OCI-LY7 (cell line): ENCODE measurements at regions of chr15 and their contacts with region 1.

Region 1: DNA sequence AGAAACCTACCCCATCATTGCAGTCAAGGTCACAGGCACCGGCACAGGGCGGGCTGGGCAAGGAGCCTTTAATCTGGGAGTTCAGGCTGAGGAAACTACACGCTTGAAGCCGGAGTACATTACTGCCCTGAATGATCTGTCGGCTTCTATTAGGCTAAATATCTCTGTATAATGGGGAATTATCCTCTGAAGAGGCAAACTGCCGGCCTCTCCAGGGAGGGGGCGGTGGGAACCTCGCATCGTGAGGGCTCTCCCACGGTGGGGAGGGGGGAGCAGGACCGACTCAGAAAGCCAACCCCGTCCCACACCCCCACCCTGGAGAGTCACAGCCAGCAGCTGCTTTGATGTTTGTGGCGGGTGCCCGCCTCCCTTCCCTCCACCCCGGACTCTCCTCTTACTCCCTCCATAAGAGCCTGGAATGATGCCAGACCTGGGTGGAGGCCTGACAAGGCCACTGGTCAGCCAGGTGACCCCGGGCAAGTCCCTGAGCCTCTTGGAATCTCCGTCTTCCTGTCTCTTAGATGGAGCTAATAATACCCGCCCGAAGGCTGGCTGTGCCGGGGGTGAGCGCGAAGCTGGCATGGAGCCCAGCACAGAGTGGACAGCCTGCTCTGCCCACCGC is 63.4 kb upstream of the LINGO1 start:
- DNase-seq: no peak
- H3K4me3 ChIP-seq: no peak overlapping the region
- H3K27ac ChIP-seq: no peak overlapping the region
- H3K4me1 ChIP-seq: no peaks in the 10 kb centered on the region
- CTCF ChIP-seq: no peak

Region 2: DNA sequence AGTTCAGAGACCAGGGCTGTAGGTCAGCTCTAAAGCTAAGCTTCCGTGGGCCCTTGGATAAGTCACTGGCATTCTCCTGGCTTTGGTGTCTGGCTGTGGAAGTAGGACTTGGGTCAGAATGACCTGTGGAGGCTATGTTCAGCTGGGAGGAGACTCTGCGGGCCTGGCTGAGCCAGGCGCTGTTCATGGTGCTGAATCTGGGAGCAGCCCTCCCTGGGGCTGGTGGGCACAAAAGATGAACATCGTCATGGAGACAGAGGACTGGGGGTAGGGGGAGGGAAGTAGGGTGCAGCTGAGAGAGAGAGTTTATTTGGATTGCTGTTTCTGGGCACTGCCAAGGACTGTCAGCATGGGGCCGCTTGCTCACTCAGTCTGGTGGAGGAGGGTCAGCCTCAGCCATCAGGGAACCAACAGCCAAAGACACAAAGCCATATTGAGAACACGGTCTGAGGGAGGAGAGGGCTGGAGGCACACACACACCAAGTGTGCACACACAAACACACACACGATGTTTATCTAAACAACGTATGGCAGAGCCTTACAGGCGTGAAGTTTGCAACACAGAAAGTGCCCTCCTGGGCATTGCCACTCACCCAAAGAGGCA is 57.3 kb after region 1 on chr15:
- CTCF ChIA-PET with region 1: no interaction called
- POLR2A ChIA-PET with region 1: no interaction called
- intact Hi-C with region 1: loop called (anchors 10 kb)
- DNase-seq: peak; percentile 7
- H3K4me3 ChIP-seq: no peak overlapping the region
- H3K27ac ChIP-seq: no peak overlapping the region
- H3K4me1 ChIP-seq: no peaks in the 10 kb centered on the region
- CTCF ChIP-seq: no peak

Region 3: GRCh38 chr15:77944002-77944867 is 248.2 kb after region 1 on chr15:
- CTCF ChIA-PET with region 1: no interaction called
- POLR2A ChIA-PET with region 1: no interaction called
- intact Hi-C with region 1: no loop called
- DNase-seq: peak; percentile 56
- H3K4me3 ChIP-seq: peak overlapping the region; percentile 35
- H3K27ac ChIP-seq: no peak overlapping the region
- H3K4me1 ChIP-seq: no peaks in the 10 kb centered on the region
- CTCF ChIP-seq: 0 out of 2 replicates have a peak, but pooled peaks have one; percentile 12